ENCODE measurements at regions of chr10 and their contacts with region 1.

Region 1: GRCh38 chr10:95531994-95532399 is 29.2 kb downstream of the SORBS1 start:
- DNase-seq: no peak
- ATAC-seq: peak in 1 of 8 donors; percentile 3
- H3K4me3 ChIP-seq: no peak overlapping the region
- H3K27ac ChIP-seq: peak overlapping the region in 8 of 10 donors; percentile 29 to 71 (median 50)
- H3K4me1 ChIP-seq: peaks cover 23 to 98% (median 84%) of the 10 kb centered on the region in 9 donors
- H3K27me3 ChIP-seq: no peaks in the 10 kb centered on the region
- CTCF ChIP-seq: no peak

Region 2: DNA sequence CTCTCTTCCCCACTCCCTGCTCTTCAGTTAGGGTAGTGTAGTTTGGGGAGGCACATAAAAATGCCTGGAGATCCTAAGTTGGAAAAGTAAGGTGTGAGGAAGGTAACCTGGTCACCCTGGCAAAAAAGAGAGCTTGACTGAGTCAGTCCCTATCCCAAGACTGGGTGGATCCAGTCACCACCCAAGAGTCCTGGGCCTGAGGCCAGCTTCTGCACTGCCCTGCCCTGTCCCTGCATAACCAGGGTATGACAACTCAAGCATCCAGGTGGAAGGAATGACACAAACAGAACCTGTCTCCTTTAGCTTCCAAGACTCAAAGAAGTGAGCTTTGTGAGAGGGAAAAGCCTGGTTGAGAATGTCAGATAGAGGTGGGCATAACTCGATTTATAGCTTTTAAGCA is 56.0 kb after region 1 on chr10:
- intact Hi-C with region 1: loop called in 1 of 10 experiments (anchors 2 kb)
- DNase-seq: no peak
- ATAC-seq: no peak
- H3K4me3 ChIP-seq: no peak overlapping the region
- H3K27ac ChIP-seq: no peak overlapping the region
- H3K4me1 ChIP-seq: no peaks in the 10 kb centered on the region
- H3K27me3 ChIP-seq: no peaks in the 10 kb centered on the region
- CTCF ChIP-seq: no peak